H1 (cell line): ENCODE measurements at regions of chr1 and their contacts with region 1.

Region 1: GRCh38 chr1:9201401-9202239 is 33.0 kb upstream of the H6PD start:
- DNase-seq: no peak
- H3K4me3 ChIP-seq: peak overlapping the region; percentile 28 to 64 (median 46); a peak in 7 of 8 replicates
- H3K27ac ChIP-seq: no peak overlapping the region
- H3K4me1 ChIP-seq: peaks cover 0 to 19% (median 7%) of the 10 kb centered on the region in 4 experiments; a peak in 6 of 7 replicates
- H3K27me3 ChIP-seq: peaks cover 44 to 80% (median 69%) of the 10 kb centered on the region in 4 experiments
- CTCF ChIP-seq: no peak
- EP300 ChIP-seq: no peak
- POLR2A ChIP-seq: no peak
- RAD21 ChIP-seq: no peak

Region 2: GRCh38 chr1:9110669-9111356 is 90.8 kb before region 1 on chr1:
- CTCF ChIA-PET with region 1: interaction called, 38 read pairs
- POLR2A ChIA-PET with region 1: no interaction called
- DNase-seq: peak; percentile 94 to 98
- H3K4me3 ChIP-seq: no peak overlapping the region
- H3K27ac ChIP-seq: no peak overlapping the region
- H3K4me1 ChIP-seq: no peaks in the 10 kb centered on the region; a peak in 2 of 7 replicates
- H3K27me3 ChIP-seq: no peaks in the 10 kb centered on the region
- CTCF ChIP-seq: peak; percentile 96 to 99 (median 97)
- EP300 ChIP-seq: no peak
- POLR2A ChIP-seq: no peak
- RAD21 ChIP-seq: peak; percentile 94 to 97

Region 3: GRCh38 chr1:9187004-9187403 is 14.6 kb before region 1 on chr1:
- CTCF ChIA-PET with region 1: interaction called, 45 read pairs
- POLR2A ChIA-PET with region 1: interaction called, 8 read pairs
- DNase-seq: no peak
- H3K4me3 ChIP-seq: no peak overlapping the region
- H3K27ac ChIP-seq: no peak overlapping the region
- H3K4me1 ChIP-seq: peaks cover 0 to 8% (median 6%) of the 10 kb centered on the region in 4 experiments; a peak in 4 of 7 replicates
- H3K27me3 ChIP-seq: peaks cover 0 to 17% (median 9%) of the 10 kb centered on the region in 4 experiments; a peak in 5 of 7 replicates
- CTCF ChIP-seq: no peak
- EP300 ChIP-seq: no peak
- POLR2A ChIP-seq: no peak
- RAD21 ChIP-seq: no peak

Region 4: GRCh38 chr1:9249534-9250410 is 48.2 kb after region 1 on chr1:
- CTCF ChIA-PET with region 1: interaction called, 38 read pairs
- POLR2A ChIA-PET with region 1: no interaction called
- DNase-seq: peak in 1 of 2 experiments; percentile 87
- H3K4me3 ChIP-seq: no peak overlapping the region
- H3K27ac ChIP-seq: no peak overlapping the region; the same call in none of the 2 replicates
- H3K4me1 ChIP-seq: peaks cover 17 to 37% (median 30%) of the 10 kb centered on the region in 4 experiments
- H3K27me3 ChIP-seq: no peaks in the 10 kb centered on the region; a peak in 1 of 7 replicates
- CTCF ChIP-seq: peak; percentile 90 to 99 (median 98)
- EP300 ChIP-seq: no peak
- POLR2A ChIP-seq: no peak
- RAD21 ChIP-seq: peak; percentile 80 to 87

Region 5: GRCh38 chr1:9270290-9270883 is 68.8 kb after region 1 on chr1:
- CTCF ChIA-PET with region 1: interaction called, 11 read pairs
- POLR2A ChIA-PET with region 1: no interaction called
- DNase-seq: peak in 1 of 2 experiments; percentile 53
- H3K4me3 ChIP-seq: no peak overlapping the region
- H3K27ac ChIP-seq: no peak overlapping the region
- H3K4me1 ChIP-seq: peaks cover 0 to 4% (median 1%) of the 10 kb centered on the region in 4 experiments; a peak in 5 of 7 replicates
- H3K27me3 ChIP-seq: no peaks in the 10 kb centered on the region; a peak in 1 of 7 replicates
- CTCF ChIP-seq: no peak
- EP300 ChIP-seq: no peak
- POLR2A ChIP-seq: no peak
- RAD21 ChIP-seq: no peak